CD4-positive, alpha-beta memory T cell (primary cell): ENCODE measurements at regions of chr19 and their contacts with region 1.

Region 1: DNA sequence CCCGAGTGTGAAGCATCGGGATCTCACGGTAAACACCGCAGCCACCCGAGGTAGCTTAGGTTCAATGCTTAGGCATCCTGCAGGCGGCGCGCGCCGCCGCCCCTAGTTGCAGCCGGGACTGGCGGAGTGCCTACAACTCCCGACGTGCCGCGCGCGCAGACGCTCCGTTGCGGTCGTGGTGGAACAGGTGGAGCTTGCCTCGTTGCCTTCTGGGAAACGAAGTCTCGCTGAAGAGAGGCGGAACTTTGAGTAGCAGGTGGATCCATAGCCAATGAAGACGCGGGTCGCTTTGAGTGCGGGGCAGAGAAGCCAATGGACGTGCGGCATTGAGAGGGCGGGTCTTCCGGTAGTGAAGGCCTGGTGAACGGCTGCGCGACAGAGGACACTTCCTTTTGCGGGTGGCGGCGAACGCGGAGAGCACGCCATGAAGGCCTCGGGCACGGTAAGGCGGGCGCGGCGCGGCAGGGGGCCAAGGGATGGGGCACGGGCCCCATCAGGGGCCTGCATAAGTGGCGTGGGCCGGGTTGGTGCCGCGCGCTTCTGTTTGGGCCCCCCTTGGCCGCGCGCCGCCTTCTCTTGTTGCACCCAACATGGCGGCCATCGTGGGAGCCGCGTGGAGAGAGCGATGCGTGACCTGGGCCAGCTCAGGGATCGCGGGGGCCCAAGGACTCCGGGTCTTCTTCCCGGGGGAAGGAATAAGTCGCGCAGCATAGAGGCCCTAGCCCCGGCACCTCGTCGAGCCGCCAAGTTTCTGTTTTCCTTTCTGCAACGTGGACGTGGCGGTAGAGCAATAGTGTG is at the start of gene RPL18A:
- DNase-seq: peak; percentile 96 to 100 (median 99)
- H3K4me3 ChIP-seq: peak within 1 kb of the TSS; percentile 91 to 100
- H3K4me3 Mint-ChIP-seq: peak within 1 kb of the TSS; percentile 98 to 100 (median 100)
- H3K27ac ChIP-seq: peak within 1 kb of the TSS; percentile 79
- H3K27ac Mint-ChIP-seq: peak within 1 kb of the TSS; percentile 88 to 100 (median 98)
- H3K4me1 ChIP-seq: peaks cover 36% of the 10 kb centered on the region
- H3K4me1 Mint-ChIP-seq: peaks cover 21 to 46% (median 29%) of the 10 kb centered on the region in 4 donors
- H3K27me3 ChIP-seq: no peaks in the 10 kb centered on the region
- H3K27me3 Mint-ChIP-seq: no peaks in the 10 kb centered on the region
- total RNA-seq, gene RPL18A: 3,084 to 3,117 TPM

Region 2: DNA sequence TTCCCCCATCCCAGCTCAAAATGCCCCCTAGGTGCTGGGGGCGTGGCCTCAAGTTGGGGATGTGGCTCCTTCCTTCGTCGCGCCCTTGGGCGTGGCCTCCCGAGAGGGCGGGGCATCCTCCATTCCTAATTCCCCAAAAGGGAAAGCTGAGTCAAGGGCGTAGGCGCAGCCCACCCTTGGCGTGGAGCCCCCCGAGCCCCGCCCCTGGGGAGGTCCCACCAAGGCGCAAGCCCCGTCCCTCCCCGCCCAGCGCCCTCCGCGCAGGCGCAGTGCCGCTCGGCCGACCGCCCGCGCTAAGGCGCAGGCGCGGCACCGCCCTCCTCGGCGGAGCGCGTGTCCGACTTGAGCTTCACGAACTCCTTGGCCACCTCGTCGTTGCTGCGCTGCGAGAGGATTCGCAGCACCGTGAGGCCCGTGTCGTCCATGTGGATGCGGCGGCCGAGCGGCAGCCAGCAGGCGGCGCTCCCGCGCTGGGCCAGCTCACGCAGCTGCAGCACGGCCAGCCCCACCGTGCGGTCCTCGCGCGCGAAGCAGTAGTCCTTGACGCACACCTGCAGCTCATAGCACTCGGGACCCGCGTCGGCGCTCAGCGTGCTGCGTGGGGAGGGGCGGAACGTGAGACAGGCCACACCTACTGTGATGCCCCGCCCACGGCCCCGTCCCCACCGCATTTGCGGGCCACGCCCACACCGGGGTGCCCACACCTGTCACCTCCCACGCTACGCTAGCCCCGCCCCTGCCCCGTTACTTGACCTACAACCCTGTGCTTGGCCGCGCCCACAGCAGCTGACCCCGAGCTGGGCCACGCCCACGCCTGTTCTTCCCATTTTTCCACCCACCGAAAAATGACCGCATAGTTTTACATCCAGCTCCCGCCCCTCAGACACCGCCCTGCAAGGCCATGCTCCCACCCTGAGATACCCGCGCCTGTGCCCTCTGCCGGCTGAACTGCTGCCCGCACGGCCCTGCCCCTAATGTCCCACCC is 253.7 kb before region 1 on chr19:
- CTCF ChIA-PET with region 1: interaction called, 4 read pairs
- POLR2A ChIA-PET with region 1: interaction called, 4 read pairs
- intact Hi-C with region 1: loop called (anchors 1 kb)
- DNase-seq: peak; percentile 82 to 93 (median 87)
- H3K4me3 ChIP-seq: peak overlapping the region; percentile 17 to 54
- H3K4me3 Mint-ChIP-seq: peak overlapping the region; percentile 72 to 84 (median 81)
- H3K27ac ChIP-seq: peak overlapping the region; percentile 17
- H3K27ac Mint-ChIP-seq: peak overlapping the region; percentile 72 to 91 (median 82)
- H3K4me1 ChIP-seq: peaks cover 13% of the 10 kb centered on the region
- H3K4me1 Mint-ChIP-seq: peaks cover 7 to 11% (median 9%) of the 10 kb centered on the region in 4 donors
- H3K27me3 ChIP-seq: peaks cover 8% of the 10 kb centered on the region
- H3K27me3 Mint-ChIP-seq: peaks cover 25 to 35% of the 10 kb centered on the region in 2 donors

Region 3: DNA sequence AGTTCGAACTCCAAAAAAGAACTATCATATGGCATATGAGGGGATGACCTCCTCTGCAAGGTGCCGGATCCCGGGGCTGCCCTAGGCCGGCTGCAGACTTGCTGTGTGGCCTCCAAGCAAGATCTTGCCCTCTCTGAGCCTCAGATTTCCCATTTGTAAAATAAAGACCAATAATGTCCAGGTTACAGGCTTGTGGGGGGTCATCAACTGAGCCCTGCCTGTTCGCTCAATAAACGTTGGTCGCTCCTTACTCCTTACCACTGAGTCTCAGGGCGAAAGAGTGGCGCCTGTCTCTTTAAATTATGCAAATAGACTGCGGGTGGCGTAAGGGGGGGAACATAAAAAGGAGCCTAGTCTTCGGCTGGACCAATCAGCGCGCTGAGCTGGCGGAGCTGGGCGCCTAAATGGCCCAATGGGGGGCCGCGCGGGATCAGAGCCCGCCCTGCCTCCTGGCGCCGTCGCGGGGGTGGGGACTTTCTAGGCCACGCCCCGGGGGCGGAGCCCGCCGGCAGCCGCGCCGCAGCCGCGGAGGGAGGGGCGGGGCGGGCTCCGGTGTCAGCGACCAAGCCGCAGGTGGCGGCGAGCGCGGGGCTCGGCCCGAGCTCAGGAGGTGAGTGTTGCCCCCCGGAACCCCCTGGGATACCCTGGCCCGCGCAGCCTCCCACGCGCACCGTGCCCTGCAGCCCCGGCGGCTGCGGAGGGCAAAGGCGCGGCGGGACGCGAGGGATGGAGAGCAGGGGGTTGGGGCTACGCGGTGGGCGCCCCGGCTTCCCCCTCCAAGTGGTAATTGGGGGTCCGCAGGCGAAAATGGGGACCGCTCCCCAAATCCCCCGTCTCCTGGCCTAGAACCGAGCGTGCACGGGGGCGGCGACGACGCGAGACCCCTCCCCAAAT is 112.3 kb before region 1 on chr19:
- CTCF ChIA-PET with region 1: interaction called, 11 read pairs
- POLR2A ChIA-PET with region 1: interaction called, 8 read pairs
- intact Hi-C with region 1: loop called (anchors 1 kb)
- DNase-seq: peak; percentile 94 to 96 (median 94)
- H3K4me3 ChIP-seq: peak overlapping the region in 1 of 2 donors; percentile 59
- H3K4me3 Mint-ChIP-seq: peak overlapping the region; percentile 73 to 96 (median 94)
- H3K27ac ChIP-seq: peak overlapping the region; percentile 52
- H3K27ac Mint-ChIP-seq: peak overlapping the region; percentile 31 to 90 (median 74)
- H3K4me1 ChIP-seq: peaks cover 44% of the 10 kb centered on the region
- H3K4me1 Mint-ChIP-seq: peaks cover 28 to 56% (median 41%) of the 10 kb centered on the region in 4 donors
- H3K27me3 ChIP-seq: no peaks in the 10 kb centered on the region
- H3K27me3 Mint-ChIP-seq: no peaks in the 10 kb centered on the region

Region 4: GRCh38 chr19:17784201-17785008 is 75.3 kb before region 1 on chr19:
- CTCF ChIA-PET with region 1: interaction called, 21 read pairs
- POLR2A ChIA-PET with region 1: no interaction called
- intact Hi-C with region 1: loop called (anchors 1 kb)
- DNase-seq: peak; percentile 68 to 72 (median 68)
- H3K4me3 ChIP-seq: no peak overlapping the region
- H3K4me3 Mint-ChIP-seq: peak overlapping the region in 2 of 8 donors; percentile 24 to 49
- H3K27ac ChIP-seq: no peak overlapping the region
- H3K27ac Mint-ChIP-seq: peak overlapping the region in 6 of 7 donors; percentile 0 to 86 (median 67)
- H3K4me1 ChIP-seq: peaks cover 6% of the 10 kb centered on the region
- H3K4me1 Mint-ChIP-seq: peaks cover 7 to 16% (median 15%) of the 10 kb centered on the region in 4 donors
- H3K27me3 ChIP-seq: no peaks in the 10 kb centered on the region
- H3K27me3 Mint-ChIP-seq: no peaks in the 10 kb centered on the region

Region 5: DNA sequence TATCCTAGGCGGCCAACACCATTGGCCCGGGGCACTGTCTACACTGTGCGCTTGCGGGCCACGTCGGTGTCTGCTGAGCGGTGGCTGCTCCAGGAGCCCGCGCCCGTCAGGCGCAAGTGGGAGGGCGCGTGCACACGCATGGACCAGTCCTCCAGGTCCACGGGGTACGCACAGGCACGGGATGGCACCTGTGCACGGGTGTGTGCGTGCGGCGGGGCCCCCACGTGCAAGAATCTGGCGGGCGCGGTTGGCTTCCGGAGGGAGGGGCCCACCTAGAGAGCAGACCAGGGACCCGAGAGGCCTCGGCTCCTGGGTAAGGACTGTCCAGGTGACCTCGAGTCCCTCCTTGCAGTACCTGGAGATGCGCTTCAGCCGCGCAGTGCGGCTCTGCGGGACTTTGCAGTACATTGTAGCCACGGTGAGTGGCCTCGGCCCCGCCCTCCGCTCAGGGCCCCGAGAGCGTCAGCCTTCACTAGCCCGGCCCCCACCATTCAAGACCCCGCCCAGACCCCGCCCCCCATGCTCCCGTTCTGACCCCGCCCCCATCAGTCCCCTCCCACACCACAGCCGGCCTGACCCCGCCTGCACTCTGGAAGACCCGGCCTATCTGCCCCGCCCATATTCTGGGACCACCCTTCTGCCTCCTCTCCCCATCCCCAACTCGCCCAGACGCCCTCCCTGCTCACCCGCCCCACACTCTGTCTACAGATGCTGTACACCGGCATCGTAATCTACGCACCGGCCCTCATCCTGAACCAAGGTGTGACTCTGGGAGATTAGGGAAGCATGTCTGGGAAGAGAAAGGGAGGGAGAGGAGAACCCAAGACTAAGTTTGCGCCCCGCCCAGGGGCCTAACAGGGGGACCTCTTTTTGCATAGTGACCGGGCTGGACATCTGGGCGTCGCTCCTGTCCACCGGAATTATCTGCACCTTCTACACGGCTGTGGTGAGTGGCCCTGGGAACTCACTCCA is 14.3 kb after region 1 on chr19:
- CTCF ChIA-PET with region 1: interaction called, 17 read pairs
- POLR2A ChIA-PET with region 1: interaction called, 81 read pairs
- intact Hi-C with region 1: loop called (anchors 1 kb)
- DNase-seq: peak; percentile 62 to 71 (median 68)
- H3K4me3 ChIP-seq: peak overlapping the region in 1 of 2 donors; percentile 59
- H3K4me3 Mint-ChIP-seq: peak overlapping the region; percentile 75 to 87 (median 81)
- H3K27ac ChIP-seq: no peak overlapping the region
- H3K27ac Mint-ChIP-seq: peak overlapping the region; percentile 46 to 92 (median 83)
- H3K4me1 ChIP-seq: peaks cover 26% of the 10 kb centered on the region
- H3K4me1 Mint-ChIP-seq: peaks cover 3 to 26% (median 11%) of the 10 kb centered on the region in 4 donors
- H3K27me3 ChIP-seq: no peaks in the 10 kb centered on the region
- H3K27me3 Mint-ChIP-seq: no peaks in the 10 kb centered on the region

Region 6: DNA sequence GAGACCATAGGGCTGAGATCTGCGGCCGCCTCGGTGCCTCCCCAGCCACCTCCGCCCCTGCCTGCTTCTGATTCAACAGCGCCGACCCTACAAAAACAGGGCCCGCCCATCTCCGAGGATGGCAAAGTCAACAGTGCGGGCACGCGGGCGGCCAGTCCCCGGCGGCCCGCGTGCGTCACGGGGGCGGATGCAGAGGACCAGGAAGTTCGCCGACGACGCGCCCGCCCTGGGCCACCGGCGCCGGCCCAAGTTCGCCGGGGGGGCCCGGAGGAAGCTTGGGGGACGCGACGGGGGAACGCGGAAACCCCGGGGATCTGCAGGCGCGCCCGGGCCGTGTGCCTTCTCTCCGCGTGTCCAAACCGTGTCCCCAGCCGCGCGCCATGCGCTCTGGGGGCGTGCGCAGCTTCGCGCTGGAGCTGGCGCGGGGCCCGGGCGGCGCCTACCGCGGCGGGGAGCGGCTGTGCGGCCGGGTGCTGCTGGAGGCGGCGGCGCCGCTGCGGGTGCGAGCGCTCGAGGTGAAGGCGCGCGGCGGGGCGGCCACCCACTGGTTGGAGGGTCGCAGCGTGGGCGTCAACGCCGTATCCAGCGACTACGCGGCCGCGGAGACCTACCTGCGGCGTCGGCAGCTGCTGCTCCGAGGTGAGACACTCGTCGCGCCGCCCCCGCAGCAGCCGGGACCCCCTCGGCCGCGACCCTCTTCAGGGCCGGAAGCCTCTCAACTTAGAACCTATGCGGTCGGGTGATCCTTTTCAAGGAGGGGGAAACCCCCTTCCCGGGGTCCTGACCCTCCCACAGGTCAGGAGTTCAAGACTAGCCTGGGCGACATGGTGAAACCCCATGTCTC is 141.4 kb after region 1 on chr19:
- CTCF ChIA-PET with region 1: interaction called, 27 read pairs
- POLR2A ChIA-PET with region 1: interaction called, 27 read pairs
- intact Hi-C with region 1: loop called (anchors 1 kb)
- DNase-seq: peak; percentile 96 to 98 (median 97)
- H3K4me3 ChIP-seq: peak overlapping the region; percentile 76 to 86
- H3K4me3 Mint-ChIP-seq: peak overlapping the region; percentile 88 to 96 (median 92)
- H3K27ac ChIP-seq: peak overlapping the region; percentile 88
- H3K27ac Mint-ChIP-seq: peak overlapping the region; percentile 93 to 100 (median 100)
- H3K4me1 ChIP-seq: peaks cover 33% of the 10 kb centered on the region
- H3K4me1 Mint-ChIP-seq: peaks cover 10 to 41% (median 24%) of the 10 kb centered on the region in 4 donors
- H3K27me3 ChIP-seq: no peaks in the 10 kb centered on the region
- H3K27me3 Mint-ChIP-seq: no peaks in the 10 kb centered on the region

Region 7: DNA sequence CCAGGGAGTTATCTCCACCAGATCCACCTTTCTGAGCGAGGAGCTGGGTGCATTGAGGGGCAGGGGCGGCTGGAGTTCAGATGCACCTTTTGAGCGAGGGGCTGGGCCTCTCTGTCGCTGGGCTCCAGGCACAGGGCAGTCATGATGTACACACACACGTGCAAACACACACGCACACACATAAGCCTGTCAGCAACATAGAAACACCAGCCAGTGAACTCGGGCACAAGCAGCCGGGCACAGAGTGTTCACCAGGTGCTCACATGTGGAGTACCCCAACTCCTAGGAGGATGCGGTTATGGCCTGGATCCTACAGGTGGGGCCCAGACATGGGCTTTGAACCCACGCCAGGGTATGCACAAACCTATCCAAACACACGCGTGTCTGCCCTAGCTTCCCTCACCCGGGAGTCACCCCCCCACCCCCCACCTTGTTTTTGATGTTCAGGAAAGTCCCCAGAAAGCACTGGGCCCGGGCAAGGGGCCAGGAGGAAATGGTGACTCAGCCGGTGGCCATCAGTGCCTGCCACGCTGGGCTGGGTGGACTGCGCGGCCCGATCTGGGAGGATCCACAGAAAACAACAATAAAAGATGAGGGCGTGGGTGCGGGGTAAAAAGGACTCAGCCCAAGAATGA is 161.5 kb after region 1 on chr19:
- CTCF ChIA-PET with region 1: no interaction called
- POLR2A ChIA-PET with region 1: no interaction called
- intact Hi-C with region 1: no loop called
- DNase-seq: peak; percentile 57 to 91 (median 64)
- H3K4me3 ChIP-seq: no peak overlapping the region
- H3K4me3 Mint-ChIP-seq: peak overlapping the region; percentile 45 to 85 (median 68)
- H3K27ac ChIP-seq: peak overlapping the region; percentile 66
- H3K27ac Mint-ChIP-seq: peak overlapping the region; percentile 91 to 99 (median 96)
- H3K4me1 ChIP-seq: peaks cover 61% of the 10 kb centered on the region
- H3K4me1 Mint-ChIP-seq: peaks cover 41 to 76% (median 60%) of the 10 kb centered on the region in 4 donors
- H3K27me3 ChIP-seq: no peaks in the 10 kb centered on the region
- H3K27me3 Mint-ChIP-seq: no peaks in the 10 kb centered on the region